ENCODE measurements at regions of chr3 and their contacts with region 1.

Region 1: DNA sequence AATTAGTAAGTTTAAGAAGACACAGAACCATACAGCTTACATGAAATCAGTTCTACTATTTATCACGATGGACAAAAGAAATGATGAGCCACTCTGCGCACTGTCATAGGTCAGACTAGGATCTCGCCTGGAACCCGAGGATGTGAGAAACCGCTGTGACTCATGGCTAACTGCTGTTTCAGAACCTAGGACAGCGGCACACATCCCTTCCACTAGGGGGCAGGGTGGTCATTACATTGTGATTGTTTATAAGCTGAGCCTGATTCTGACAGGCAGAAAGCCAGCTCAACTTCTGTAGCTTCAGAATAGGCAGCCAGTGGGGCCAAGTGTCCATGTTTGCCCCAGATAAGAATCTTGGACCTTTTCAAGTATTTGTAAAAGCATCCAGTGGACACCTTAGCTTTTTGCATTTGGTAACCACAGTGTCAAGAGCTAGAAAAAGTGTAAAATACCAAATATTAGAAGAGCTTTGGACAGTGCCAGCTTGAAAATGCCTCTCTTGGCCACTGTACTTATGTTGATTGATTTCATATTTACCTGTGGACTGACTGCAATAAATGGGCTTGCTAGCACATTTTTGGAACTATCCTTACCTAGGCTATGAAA is 115.8 kb downstream of the KBTBD8 start:
- DNase-seq: peak; percentile 81
- H3K4me3 Mint-ChIP-seq: no peak overlapping the region
- H3K27ac Mint-ChIP-seq: no peak overlapping the region
- H3K4me1 Mint-ChIP-seq: no peaks in the 10 kb centered on the region
- H3K27me3 Mint-ChIP-seq: no peaks in the 10 kb centered on the region
- CTCF ChIP-seq: peak; percentile 78

Region 2: GRCh38 chr3:66098436-66098835 is 1015.5 kb before region 1 on chr3:
- CTCF ChIA-PET with region 1: no interaction called
- intact Hi-C with region 1: no loop called
- DNase-seq: no peak
- H3K4me3 Mint-ChIP-seq: no peak overlapping the region
- H3K27ac Mint-ChIP-seq: no peak overlapping the region
- H3K4me1 Mint-ChIP-seq: peaks cover 14% of the 10 kb centered on the region
- H3K27me3 Mint-ChIP-seq: no peaks in the 10 kb centered on the region
- CTCF ChIP-seq: no peak

Region 3: DNA sequence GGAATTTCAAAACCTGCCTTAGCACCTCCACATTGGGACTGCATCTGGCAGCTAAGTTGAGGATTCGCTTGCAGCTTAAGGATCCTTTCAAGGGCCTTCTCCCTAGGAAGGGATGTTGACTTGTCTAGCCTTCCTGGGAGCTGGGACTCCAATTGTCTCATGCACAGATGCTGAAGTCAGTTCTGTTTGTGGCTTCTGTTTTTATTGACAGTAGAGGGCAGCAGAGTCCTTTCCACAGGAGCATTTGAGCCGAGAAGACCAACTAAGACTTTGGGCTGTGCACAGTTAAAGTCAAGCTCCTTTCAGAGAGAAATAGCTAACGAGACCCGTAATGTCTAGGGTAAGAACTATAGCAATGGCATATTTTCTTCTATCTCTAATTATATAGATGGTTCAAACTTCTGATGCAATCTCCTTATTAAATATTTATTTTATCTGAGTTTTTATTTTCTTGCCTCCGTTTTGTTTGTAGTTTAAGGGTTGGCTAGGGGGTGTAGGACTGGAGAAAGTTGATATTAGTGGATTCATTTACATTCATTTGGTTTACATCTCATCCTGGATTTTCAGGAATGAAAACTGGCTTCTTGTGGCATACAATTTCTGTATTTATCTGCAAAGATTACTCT is 175.5 kb before region 1 on chr3:
- CTCF ChIA-PET with region 1: interaction called, 7 read pairs
- intact Hi-C with region 1: loop called (anchors 2 kb)
- DNase-seq: peak; percentile 40
- H3K4me3 Mint-ChIP-seq: no peak overlapping the region
- H3K27ac Mint-ChIP-seq: no peak overlapping the region
- H3K4me1 Mint-ChIP-seq: no peaks in the 10 kb centered on the region
- H3K27me3 Mint-ChIP-seq: no peaks in the 10 kb centered on the region
- CTCF ChIP-seq: peak; percentile 65

Region 4: DNA sequence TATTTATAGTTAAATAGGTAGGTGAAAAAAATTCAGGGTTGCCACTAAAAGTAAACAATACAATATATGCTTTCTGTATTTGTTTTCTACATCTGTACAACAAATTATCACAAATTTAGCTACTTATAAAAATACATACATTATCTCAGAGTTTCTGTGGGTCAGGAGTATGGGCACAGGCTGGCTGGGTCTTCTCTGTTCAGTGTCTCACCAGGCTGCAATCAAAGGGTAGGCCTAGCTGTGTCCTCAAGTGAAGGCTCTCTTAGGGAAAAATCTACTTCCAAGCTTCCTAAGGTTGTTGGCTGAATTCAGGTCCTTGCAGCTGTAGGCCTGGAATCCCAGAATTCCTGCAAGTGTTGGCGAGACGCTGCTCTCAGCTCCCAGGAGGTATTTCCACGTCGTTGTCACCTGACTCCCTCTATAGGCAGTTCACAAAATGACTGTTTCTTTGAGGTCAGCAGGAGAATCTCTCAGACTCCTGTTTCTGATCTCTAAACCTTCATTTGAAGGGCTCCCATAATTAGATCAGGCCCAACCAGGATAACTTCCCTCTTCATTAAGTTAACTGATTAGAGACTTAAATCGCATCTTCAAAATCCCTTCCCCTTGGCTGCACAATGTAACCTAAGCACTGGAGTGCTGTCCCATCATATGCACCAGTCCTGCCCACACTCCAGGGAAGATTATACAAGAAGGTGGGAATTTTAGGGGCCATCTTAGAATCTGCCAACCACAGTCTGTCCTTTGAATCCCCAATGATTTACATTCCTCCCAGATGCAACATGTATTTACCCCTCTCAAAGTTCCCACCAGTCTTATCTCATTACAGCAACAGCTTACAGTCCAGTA is 243.9 kb after region 1 on chr3:
- CTCF ChIA-PET with region 1: interaction called, 15 read pairs
- intact Hi-C with region 1: loop called (anchors 5 kb)
- DNase-seq: peak; percentile 40
- H3K4me3 Mint-ChIP-seq: no peak overlapping the region
- H3K27ac Mint-ChIP-seq: no peak overlapping the region
- H3K4me1 Mint-ChIP-seq: peaks cover 33% of the 10 kb centered on the region
- H3K27me3 Mint-ChIP-seq: no peaks in the 10 kb centered on the region
- CTCF ChIP-seq: peak; percentile 47

Region 5: GRCh38 chr3:68876112-68876713 is 1762.3 kb after region 1 on chr3:
- CTCF ChIA-PET with region 1: interaction called, 17 read pairs
- intact Hi-C with region 1: loop called (anchors 2 kb)
- DNase-seq: peak; percentile 42
- H3K4me3 Mint-ChIP-seq: no peak overlapping the region
- H3K27ac Mint-ChIP-seq: no peak overlapping the region
- H3K4me1 Mint-ChIP-seq: no peaks in the 10 kb centered on the region
- H3K27me3 Mint-ChIP-seq: peaks cover 54% of the 10 kb centered on the region
- CTCF ChIP-seq: peak; percentile 58

Region 6: DNA sequence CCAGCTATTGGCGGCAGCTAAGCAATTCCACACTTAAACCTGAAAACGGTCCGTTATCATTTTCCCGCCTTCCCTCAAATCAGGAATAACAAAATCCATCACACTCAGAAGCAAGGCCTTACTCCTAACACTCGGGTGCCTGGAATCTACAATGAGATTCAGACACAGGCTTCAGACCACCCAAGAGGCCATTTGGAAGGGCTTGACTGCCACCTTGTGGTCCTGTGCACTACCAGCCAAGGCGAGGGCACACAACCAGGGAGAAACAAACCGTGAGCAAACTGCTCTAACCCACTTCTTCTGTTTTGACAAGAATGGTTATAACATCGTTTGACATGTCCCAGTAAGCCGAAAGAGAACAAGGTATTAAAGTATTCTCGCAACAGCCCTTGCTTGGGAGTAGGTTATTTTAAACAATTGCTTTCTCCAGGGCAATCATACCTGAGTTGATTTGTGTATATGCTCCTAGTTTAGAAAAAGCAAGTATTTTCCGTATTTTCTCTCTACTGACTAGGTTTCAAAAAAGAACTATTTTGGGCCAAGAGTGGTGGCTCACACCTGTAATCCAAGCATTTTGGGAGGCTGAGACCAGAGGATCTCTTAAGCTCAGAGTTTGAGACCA is 1858.6 kb after region 1 on chr3:
- CTCF ChIA-PET with region 1: no interaction called
- intact Hi-C with region 1: loop called (anchors 10 kb)
- DNase-seq: peak; percentile 67
- H3K4me3 Mint-ChIP-seq: no peak overlapping the region
- H3K27ac Mint-ChIP-seq: no peak overlapping the region
- H3K4me1 Mint-ChIP-seq: no peaks in the 10 kb centered on the region
- H3K27me3 Mint-ChIP-seq: peaks cover 46% of the 10 kb centered on the region
- CTCF ChIP-seq: peak; percentile 66

Measured in Calu3 (cell line).